Activated T-helper 2 cell treated with anti-CD3 and anti-CD28 coated beads, Interferon-gamma antibody, Interleukin-2, Interleukin-4, amounts not matched to agents 10 μg/mL and 5 μg/mL and 100 μg/mL, durations not matched to agents 14 hours and 24 hours and 36 hours (primary cell): ENCODE measurements at regions of chrX and their contacts with region 1.

Region 1: DNA sequence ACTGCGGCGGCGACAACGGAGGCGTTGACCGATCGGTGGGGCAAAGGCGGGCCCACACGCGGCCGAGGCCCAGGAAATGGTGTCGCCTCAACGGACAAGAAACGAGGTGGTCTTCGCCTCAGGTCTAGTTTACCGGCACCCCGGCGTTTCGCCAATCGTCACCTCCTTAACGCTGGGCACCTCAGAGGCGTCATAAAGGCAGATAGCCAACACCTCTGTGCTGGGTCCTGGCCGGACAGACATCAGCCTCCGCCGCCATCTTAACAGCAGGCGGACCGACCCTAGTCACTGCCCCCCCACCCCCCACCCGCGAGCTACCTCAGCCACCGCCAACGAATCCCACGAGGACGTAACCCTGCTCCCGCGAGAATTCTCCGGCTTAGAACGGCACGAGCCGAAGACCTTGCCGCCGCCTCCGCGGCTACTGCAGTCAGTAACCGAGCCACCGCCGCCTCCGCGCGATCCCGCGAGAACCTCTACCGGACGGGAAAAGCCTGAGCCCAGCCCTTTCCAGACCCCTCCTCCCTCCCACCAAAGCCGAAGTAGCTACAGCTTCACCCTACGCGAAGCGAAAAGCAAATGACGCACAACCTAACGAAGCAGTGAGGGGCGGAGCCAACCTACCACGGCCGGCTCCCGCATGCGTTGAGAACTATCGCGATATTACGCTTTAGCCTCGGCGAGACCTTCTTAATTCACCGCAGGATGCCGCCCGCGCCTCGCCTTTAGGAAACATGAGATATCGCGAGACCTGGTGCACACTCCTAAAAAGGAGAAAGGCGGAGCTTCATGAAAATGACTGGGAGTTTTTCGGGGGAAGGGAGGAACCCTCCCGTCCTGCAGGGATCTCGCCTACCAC is 2.7 kb downstream of the HUWE1 start:
- DNase-seq: peak; percentile 90
- H3K4me3 Mint-ChIP-seq: peak overlapping the region; percentile 94
- H3K27ac Mint-ChIP-seq: peak overlapping the region; percentile 93
- H3K4me1 Mint-ChIP-seq: peaks cover 29% of the 10 kb centered on the region
- H3K27me3 Mint-ChIP-seq: no peaks in the 10 kb centered on the region

Region 2: DNA sequence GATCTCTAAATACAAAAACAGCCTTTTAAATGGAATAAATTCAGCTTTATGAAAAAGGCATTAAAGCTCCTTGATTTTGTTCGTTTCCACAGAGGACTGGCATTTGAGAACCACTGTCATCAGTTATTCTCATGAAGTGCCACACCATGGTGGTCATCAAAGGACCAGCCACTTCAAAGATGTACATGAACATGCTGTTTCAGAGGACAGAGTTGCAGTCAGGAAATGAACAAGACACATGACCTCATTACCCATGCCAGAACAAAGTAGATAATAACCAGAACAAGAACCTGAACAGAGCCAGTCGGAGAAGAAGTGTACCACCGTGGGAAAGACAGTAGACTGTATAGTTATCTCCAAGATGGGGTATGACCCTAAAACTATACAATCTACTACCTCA is 126.9 kb before region 1 on chrX:
- intact Hi-C with region 1: no loop called
- DNase-seq: no peak
- H3K4me3 Mint-ChIP-seq: no peak overlapping the region
- H3K27ac Mint-ChIP-seq: no peak overlapping the region
- H3K4me1 Mint-ChIP-seq: peaks cover 1% of the 10 kb centered on the region
- H3K27me3 Mint-ChIP-seq: no peaks in the 10 kb centered on the region

Region 3: DNA sequence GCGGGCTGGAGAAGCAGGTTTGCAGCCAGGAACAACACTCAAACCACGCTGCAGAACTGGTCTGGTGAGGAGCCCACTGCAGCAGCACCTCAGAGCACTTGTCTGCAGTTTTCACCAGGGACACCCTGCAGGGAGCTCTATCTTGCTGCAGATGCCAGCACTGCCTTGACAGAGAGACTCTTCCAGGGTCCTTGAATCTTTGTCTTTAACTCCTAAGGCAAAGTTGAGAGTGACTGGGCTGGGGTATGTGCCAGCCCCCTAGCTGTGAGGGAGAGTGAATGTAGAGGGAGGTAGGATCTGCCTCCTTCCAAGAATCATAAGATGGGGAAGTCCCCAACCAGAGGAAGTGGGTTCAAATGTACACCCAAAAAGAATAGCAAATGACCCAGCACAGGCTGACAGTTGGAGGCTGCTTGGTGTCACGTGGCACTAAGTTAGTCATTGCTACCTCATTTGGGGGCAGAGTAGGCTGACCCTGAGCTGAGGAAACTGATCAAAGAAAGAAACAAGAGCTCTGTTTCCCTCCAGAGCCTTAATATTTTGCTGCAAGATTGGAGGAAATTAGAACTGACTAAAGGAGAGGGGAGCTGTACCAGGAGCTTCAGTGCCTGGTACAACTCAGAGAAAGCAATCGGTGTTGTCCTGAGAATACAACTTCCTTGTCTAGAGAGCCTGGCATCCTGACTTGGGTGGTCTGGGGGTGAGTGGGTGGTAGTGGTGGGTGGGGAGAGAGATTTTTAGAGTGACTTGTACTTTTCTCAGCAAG is 31.0 kb after region 1 on chrX:
- intact Hi-C with region 1: loop called (anchors 1 kb)
- DNase-seq: peak; percentile 69
- H3K4me3 Mint-ChIP-seq: peak overlapping the region; percentile 86
- H3K27ac Mint-ChIP-seq: peak overlapping the region; percentile 99
- H3K4me1 Mint-ChIP-seq: peaks cover 46% of the 10 kb centered on the region
- H3K27me3 Mint-ChIP-seq: no peaks in the 10 kb centered on the region

Region 4: DNA sequence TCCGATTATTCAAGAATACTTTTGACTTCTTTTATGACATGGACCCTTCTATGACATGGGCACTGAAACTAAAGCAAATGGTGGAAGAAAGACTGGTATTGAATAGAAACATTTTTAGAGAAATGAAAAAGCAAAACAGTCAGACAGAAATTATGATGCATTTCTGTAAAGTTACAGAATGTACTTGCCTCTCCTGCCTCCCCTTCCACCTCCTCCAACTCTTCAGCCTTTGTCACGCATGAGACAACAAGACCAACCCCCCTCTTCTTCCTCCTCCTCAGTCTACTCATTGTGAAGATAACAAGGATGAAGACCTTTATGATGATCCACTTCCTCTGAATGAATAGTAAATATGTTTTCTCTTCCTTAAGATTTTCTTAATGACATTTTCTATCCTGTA is 49.0 kb after region 1 on chrX:
- intact Hi-C with region 1: loop called (anchors 5 kb)
- DNase-seq: no peak
- H3K4me3 Mint-ChIP-seq: peak overlapping the region; percentile 73
- H3K27ac Mint-ChIP-seq: peak overlapping the region; percentile 90
- H3K4me1 Mint-ChIP-seq: peaks cover 40% of the 10 kb centered on the region
- H3K27me3 Mint-ChIP-seq: no peaks in the 10 kb centered on the region

Region 5: GRCh38 chrX:53831662-53832635 is 148.2 kb after region 1 on chrX:
- intact Hi-C with region 1: loop called (anchors 5 kb)
- DNase-seq: peak; percentile 17
- H3K4me3 Mint-ChIP-seq: no peak overlapping the region
- H3K27ac Mint-ChIP-seq: peak overlapping the region; percentile 36
- H3K4me1 Mint-ChIP-seq: peaks cover 10% of the 10 kb centered on the region
- H3K27me3 Mint-ChIP-seq: no peaks in the 10 kb centered on the region

Region 6: GRCh38 chrX:54093159-54093558 is 409.4 kb after region 1 on chrX:
- intact Hi-C with region 1: no loop called
- DNase-seq: no peak
- H3K4me3 Mint-ChIP-seq: no peak overlapping the region
- H3K27ac Mint-ChIP-seq: no peak overlapping the region
- H3K4me1 Mint-ChIP-seq: no peaks in the 10 kb centered on the region
- H3K27me3 Mint-ChIP-seq: no peaks in the 10 kb centered on the region

Region 7: DNA sequence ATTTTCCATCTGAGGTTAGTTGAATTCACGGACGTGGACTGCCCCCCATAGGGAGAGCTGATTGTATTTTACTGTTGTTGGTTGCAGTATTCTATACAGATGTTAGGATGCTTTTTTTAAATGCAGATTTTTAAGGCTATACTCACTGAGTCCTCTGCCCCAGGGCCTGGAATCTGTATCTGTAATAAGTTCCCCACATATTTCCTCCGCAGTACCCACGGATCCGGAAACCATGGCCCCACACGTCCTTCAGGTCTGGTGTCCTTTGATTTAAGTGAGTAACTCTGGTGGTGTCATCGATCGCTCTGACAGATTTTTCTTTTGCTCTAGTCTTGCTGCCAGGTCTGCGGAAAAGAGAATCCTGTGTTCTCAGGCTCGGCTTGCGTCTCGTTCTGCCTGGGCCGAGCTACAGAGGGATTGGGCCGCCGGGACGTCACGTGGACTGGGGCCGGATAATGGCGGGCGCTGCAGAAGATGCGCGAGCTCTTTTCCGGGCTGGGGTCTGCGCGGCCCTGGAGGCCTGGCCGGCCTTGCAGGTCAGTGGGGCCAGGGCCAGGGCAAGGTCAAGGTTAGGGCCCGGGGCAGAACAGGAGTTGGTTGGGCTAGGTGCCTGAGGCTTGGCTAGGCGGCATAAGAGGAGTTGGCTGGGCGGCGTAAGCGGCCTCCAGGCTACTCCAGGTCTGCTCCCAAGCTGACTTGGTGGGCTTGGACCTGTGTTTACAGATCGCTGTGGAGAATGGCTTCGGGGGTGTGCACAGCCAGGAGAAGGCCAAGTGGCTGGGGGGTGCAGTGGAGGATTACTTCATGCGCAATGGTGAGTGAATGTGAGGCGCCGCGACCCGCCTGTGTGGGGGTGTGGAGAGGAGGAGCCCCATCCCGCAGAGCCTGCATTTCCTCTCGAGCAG is 756.4 kb after region 1 on chrX and contains the start of gene TSR2:
- intact Hi-C with region 1: loop called (anchors 5 kb)
- DNase-seq: peak; percentile 72
- H3K4me3 Mint-ChIP-seq: peak within 1 kb of the TSS; percentile 96
- H3K27ac Mint-ChIP-seq: peak within 1 kb of the TSS; percentile 87
- H3K4me1 Mint-ChIP-seq: peaks cover 13% of the 10 kb centered on the region
- H3K27me3 Mint-ChIP-seq: no peaks in the 10 kb centered on the region
- total RNA-seq, gene TSR2: 36.8 and 37.7 TPM in 2 replicates